HCT116 (cell line): ENCODE measurements at regions of chr9 and their contacts with region 1.

Region 1: DNA sequence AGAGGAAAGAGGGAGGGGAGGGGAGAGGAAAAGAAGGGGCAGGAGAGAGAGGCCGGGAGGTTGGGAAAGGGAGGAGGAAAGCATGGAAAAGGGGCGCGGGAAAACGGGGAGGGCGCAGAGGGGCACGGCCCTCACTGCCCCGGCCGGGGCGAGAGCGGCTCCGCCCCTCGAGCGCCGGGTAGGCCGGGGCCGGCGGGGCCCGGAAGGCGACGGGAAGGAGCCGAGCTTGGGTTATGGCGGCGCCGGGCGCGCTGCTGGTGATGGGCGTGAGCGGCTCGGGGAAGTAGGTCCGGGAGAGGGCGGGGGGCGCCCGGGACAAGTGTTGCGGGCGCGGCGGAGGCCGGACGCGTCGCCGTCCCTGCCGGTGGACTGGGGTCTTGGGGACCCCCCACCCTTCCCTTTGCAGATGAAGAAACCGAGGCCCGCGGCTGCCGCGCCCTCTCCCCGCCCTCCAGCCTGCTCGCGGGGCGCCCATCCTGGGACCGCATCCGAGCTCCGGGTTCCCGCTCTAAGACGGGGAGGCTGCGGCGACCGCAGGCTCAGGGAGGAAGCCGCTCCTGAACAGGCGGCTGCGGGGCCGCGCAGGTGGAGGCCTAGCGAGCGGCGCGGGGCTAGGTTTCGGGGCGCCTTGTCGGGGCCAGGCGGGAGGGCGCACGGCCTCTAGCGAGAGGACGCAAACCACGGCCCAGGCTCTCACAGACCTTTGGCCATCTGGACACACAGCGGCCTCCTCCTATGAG is at the start of gene IDNK:
- DNase-seq: peak; percentile 10
- ATAC-seq: peak; percentile 85
- H3K4me3 ChIP-seq: peak within 1 kb of the TSS; percentile 63 to 76
- H3K27ac ChIP-seq: peak within 1 kb of the TSS; percentile 82
- H3K4me1 ChIP-seq: peaks cover 3 to 24% of the 10 kb centered on the region in 2 experiments; a peak in 3 of 4 replicates
- H3K27me3 ChIP-seq: no peaks in the 10 kb centered on the region
- CTCF ChIP-seq: no peak
- POLR2A ChIP-seq: peak; percentile 34
- RAD21 ChIP-seq: no peak
- total RNA-seq, gene IDNK: 3.3 TPM

Region 2: DNA sequence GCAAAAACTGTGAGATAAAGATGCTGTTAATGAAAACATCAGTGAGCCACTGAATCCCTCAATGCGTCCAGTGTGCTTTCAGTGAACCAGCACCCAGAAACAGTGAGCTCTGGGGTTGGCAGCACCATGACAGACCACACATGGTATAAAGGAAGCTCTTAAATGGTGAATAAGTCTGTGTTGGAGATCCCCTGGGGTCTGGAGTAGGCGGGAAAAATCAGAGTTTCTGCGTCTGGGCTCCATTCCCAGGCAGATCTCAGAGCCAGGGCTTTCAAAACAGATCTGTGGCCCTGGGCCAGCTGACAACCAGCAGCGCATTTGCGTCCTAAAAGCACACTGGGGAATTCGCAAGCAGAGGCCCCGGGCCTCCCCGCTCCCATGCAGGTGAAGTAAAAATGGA is 318.4 kb before region 1 on chr9:
- CTCF ChIA-PET with region 1: no interaction called
- POLR2A ChIA-PET with region 1: no interaction called
- RAD21 ChIA-PET with region 1: no interaction called
- intact Hi-C with region 1: no loop called
- DNase-seq: no peak
- ATAC-seq: no peak
- H3K4me3 ChIP-seq: no peak overlapping the region
- H3K27ac ChIP-seq: no peak overlapping the region
- H3K4me1 ChIP-seq: no peaks in the 10 kb centered on the region; a peak in 1 of 4 replicates
- H3K27me3 ChIP-seq: 0 out of 2 replicates have a peak, but pooled peaks cover 4% of the 10 kb centered on the region
- CTCF ChIP-seq: no peak
- POLR2A ChIP-seq: no peak
- RAD21 ChIP-seq: no peak

Region 3: GRCh38 chr9:83382421-83382820 is 240.7 kb before region 1 on chr9:
- CTCF ChIA-PET with region 1: no interaction called
- POLR2A ChIA-PET with region 1: no interaction called
- RAD21 ChIA-PET with region 1: no interaction called
- intact Hi-C with region 1: no loop called
- DNase-seq: no peak
- ATAC-seq: no peak
- H3K4me3 ChIP-seq: no peak overlapping the region
- H3K27ac ChIP-seq: no peak overlapping the region
- H3K4me1 ChIP-seq: no peaks in the 10 kb centered on the region
- H3K27me3 ChIP-seq: no peaks in the 10 kb centered on the region
- CTCF ChIP-seq: no peak
- POLR2A ChIP-seq: no peak
- RAD21 ChIP-seq: no peak

Region 4: DNA sequence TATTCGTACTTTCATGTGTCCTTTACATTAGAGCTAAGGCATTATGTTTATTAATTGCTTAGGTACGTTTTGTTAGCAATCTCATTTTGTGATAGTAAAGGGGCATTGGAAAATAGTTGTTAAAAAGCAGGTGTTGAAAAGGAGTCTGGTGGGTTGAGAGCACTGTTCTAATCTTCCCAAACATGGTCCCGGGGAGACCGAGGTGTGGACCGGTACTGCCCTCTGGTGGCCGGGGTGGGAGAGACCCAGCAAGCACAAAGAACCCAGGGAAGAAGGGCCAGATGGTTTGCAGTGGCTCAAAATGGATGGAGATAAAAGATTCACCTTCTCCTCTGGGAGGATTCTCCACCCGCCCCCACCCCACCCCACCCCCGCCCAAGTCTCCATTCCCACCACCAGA is 26.0 kb after region 1 on chr9:
- CTCF ChIA-PET with region 1: interaction called, 16 read pairs
- POLR2A ChIA-PET with region 1: no interaction called
- RAD21 ChIA-PET with region 1: interaction called in 1 of 2 experiments, 4 read pairs
- intact Hi-C with region 1: loop called (anchors 2 kb)
- DNase-seq: peak; percentile 6
- ATAC-seq: peak; percentile 92
- H3K4me3 ChIP-seq: no peak overlapping the region
- H3K27ac ChIP-seq: no peak overlapping the region
- H3K4me1 ChIP-seq: no peaks in the 10 kb centered on the region
- H3K27me3 ChIP-seq: no peaks in the 10 kb centered on the region
- CTCF ChIP-seq: peak; percentile 36 to 83 (median 81); a peak in 5 of 6 replicates
- POLR2A ChIP-seq: no peak
- RAD21 ChIP-seq: peak; percentile 64

Region 5: GRCh38 chr9:83919111-83919510 is 296.0 kb after region 1 on chr9:
- CTCF ChIA-PET with region 1: no interaction called
- POLR2A ChIA-PET with region 1: no interaction called
- RAD21 ChIA-PET with region 1: no interaction called
- intact Hi-C with region 1: loop called (anchors 5 kb)
- DNase-seq: no peak
- ATAC-seq: no peak
- H3K4me3 ChIP-seq: no peak overlapping the region
- H3K27ac ChIP-seq: no peak overlapping the region
- H3K4me1 ChIP-seq: peaks cover 6 to 16% of the 10 kb centered on the region in 2 experiments
- H3K27me3 ChIP-seq: no peaks in the 10 kb centered on the region
- CTCF ChIP-seq: no peak
- POLR2A ChIP-seq: no peak
- RAD21 ChIP-seq: no peak